A549 (cell line): ENCODE measurements at regions of chr12 and their contacts with region 1.

Region 1: GRCh38 chr12:98698603-98699463 is 53.7 kb downstream of the APAF1 start:
- DNase-seq: peak; percentile 66 to 84
- ATAC-seq: peak; percentile 99 to 100
- H3K4me3 ChIP-seq: no peak overlapping the region
- H3K27ac ChIP-seq: no peak overlapping the region
- H3K4me1 ChIP-seq: no peaks in the 10 kb centered on the region
- CTCF ChIP-seq: peak; percentile 80
- EP300 ChIP-seq: no peak
- POLR2A ChIP-seq: no peak
- RAD21 ChIP-seq: peak; percentile 85 to 92

Region 2: DNA sequence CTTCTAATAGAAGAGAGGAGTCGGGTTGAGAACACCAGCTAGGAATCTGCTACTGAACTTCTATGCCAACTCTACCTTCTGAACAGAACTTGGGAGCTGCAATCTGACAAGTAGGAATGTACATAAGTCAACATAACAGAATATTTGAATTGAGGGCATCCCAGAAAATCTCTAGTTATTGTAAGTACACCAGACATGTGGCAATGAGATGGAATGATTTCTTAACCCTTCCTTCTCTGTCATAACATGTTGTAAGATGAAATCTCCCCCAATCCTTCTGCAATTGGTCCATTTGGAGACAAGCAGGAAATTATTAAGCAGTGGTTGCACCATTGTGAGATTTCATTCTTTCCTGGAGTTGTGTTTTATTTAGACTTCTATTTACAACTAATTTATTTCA is 252.2 kb before region 1 on chr12:
- CTCF ChIA-PET with region 1: no interaction called
- POLR2A ChIA-PET with region 1: no interaction called
- DNase-seq: peak in 1 of 2 experiments; percentile 27
- ATAC-seq: peak in 1 of 2 experiments; percentile 47; a peak in 3 of 6 replicates
- H3K4me3 ChIP-seq: no peak overlapping the region
- H3K27ac ChIP-seq: no peak overlapping the region; a peak in 1 of 6 replicates
- H3K4me1 ChIP-seq: 0 out of 3 replicates have a peak, but pooled peaks cover 15% of the 10 kb centered on the region
- CTCF ChIP-seq: no peak
- EP300 ChIP-seq: no peak
- POLR2A ChIP-seq: no peak
- RAD21 ChIP-seq: no peak

Region 3: DNA sequence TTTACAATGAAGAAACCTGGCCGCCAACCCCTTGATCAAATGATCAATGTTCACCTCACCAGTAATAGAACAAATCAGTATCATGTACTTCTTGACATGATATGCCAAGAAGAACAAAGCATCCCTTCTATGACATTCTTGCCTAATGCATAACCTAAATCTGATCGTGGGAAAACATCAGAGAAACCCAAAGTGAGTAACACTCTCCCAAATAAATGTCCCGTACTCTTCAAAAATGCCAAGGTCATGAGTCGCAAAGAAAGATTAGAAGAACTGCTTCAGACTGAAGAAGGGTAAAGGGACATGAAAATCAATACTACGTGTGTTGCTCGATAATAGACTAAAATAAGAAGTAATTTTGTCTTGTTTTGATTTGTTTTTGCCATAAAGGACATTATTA is 116.7 kb before region 1 on chr12:
- CTCF ChIA-PET with region 1: no interaction called
- POLR2A ChIA-PET with region 1: no interaction called
- DNase-seq: no peak
- ATAC-seq: no peak
- H3K4me3 ChIP-seq: no peak overlapping the region
- H3K27ac ChIP-seq: no peak overlapping the region
- H3K4me1 ChIP-seq: peaks cover 8% of the 10 kb centered on the region; the same call in 2 of the 3 replicates
- CTCF ChIP-seq: no peak
- EP300 ChIP-seq: no peak
- POLR2A ChIP-seq: no peak
- RAD21 ChIP-seq: no peak

Region 4: DNA sequence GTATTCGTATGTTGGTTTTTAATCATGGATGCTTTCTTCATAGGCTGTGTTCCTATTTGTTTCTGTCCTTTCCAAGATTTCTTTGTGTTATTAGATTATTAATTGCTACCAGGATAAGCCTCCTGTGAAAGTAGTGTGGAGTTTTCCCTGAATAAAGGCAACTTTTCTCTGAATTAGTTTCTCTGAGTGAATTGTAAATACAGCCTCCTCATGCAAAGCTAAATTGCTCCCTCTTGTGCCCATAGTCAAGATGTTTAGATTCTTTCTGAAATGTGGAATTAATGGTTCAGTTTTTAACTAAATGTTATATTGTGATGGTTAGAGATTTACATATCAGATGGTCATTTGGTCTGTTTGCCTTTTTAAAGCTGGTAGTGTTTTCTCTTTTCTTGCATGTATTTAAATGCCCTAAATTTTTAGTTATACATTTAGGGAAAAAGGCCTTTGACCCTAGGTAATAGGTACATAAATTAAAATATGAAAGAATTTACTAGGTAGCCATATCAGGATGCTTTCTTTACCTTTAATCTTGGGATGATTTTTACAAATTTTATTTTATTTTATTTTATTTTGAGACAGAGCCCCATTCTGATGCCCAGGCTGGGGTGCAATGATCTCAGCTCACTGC is 44.9 kb before region 1 on chr12:
- CTCF ChIA-PET with region 1: no interaction called
- POLR2A ChIA-PET with region 1: no interaction called
- DNase-seq: peak; percentile 33 to 77
- ATAC-seq: peak; percentile 64 to 83; a peak in 3 of 6 replicates
- H3K4me3 ChIP-seq: no peak overlapping the region
- H3K27ac ChIP-seq: no peak overlapping the region
- H3K4me1 ChIP-seq: no peaks in the 10 kb centered on the region
- CTCF ChIP-seq: peak; percentile 88
- EP300 ChIP-seq: no peak
- POLR2A ChIP-seq: no peak
- RAD21 ChIP-seq: peak; percentile 91 to 94

Region 5: GRCh38 chr12:98686603-98687002 is 12.2 kb before region 1 on chr12:
- CTCF ChIA-PET with region 1: interaction called, 10 read pairs
- POLR2A ChIA-PET with region 1: no interaction called
- DNase-seq: no peak
- ATAC-seq: no peak
- H3K4me3 ChIP-seq: no peak overlapping the region
- H3K27ac ChIP-seq: no peak overlapping the region
- H3K4me1 ChIP-seq: no peaks in the 10 kb centered on the region
- CTCF ChIP-seq: no peak
- EP300 ChIP-seq: no peak
- POLR2A ChIP-seq: no peak
- RAD21 ChIP-seq: no peak

Region 6: DNA sequence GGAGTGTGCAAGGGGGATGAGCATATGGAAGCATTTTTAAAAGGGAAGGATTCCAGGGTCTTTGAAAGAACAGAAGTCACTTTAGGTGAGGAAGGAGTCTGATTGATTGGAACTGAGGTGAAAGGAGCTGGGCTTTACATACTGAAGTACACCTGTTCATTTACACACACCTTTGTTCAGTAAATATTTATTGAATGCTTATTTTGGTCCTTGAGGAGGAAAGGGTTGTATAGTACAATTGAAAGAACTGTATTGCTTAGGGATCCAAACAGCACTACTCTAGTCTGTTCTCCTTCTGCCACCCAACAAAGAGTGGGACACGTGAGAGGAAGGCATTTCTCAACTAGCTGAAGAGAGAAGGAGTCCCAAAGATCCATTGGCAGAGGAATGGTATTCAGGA is 10.2 kb after region 1 on chr12:
- CTCF ChIA-PET with region 1: interaction called, 20 read pairs
- POLR2A ChIA-PET with region 1: no interaction called
- DNase-seq: no peak
- ATAC-seq: no peak
- H3K4me3 ChIP-seq: no peak overlapping the region
- H3K27ac ChIP-seq: no peak overlapping the region
- H3K4me1 ChIP-seq: no peaks in the 10 kb centered on the region
- CTCF ChIP-seq: no peak
- EP300 ChIP-seq: no peak
- POLR2A ChIP-seq: no peak
- RAD21 ChIP-seq: no peak

Region 7: DNA sequence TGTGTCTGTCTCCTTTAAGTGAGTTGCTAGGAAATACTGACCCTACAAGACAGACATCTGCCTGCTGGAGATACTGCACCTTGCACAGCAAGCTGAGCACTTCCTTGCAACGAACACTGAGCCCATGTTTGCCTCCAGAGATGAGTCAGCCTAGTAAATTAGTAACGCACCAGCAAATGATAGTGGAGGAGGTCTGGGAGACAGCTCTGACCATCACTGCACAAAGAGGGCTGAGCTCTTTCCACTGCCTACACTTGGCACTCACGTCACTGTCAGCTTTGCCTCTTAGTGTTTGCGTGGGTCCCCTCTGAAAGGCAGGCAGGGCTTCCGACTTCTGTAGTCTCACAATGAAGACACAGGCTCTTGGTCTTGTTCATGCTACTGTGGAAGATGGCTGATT is 55.3 kb after region 1 on chr12:
- CTCF ChIA-PET with region 1: interaction called, 13 read pairs
- POLR2A ChIA-PET with region 1: no interaction called
- DNase-seq: peak; percentile 86 to 87
- ATAC-seq: peak; percentile 97 to 98
- H3K4me3 ChIP-seq: no peak overlapping the region
- H3K27ac ChIP-seq: peak overlapping the region; percentile 41 to 77
- H3K4me1 ChIP-seq: peaks cover 26% of the 10 kb centered on the region
- CTCF ChIP-seq: no peak
- EP300 ChIP-seq: no peak
- POLR2A ChIP-seq: no peak
- RAD21 ChIP-seq: no peak

Region 8: DNA sequence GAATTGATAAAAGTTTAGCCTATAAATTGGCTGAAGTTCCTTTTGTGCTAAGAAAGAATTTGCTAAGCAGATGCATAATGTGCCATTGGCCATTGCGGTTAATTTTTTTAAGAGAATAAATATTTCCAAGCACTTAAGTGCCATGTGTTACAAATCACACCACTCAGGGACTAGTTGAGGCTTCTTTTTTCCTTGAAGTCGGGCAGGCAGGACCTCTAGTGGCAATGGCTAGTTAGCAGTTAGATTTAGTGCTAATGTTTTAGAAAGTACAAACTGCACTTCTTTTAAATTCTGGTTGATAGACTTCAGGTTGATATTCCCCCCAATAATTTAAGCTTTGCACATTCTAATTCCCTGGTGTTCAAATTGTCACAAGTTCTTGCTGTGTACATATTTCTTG is 240.5 kb after region 1 on chr12:
- CTCF ChIA-PET with region 1: interaction called, 11 read pairs
- POLR2A ChIA-PET with region 1: no interaction called
- DNase-seq: peak in 1 of 2 experiments; percentile 48
- ATAC-seq: peak; percentile 76 to 83; a peak in 4 of 6 replicates
- H3K4me3 ChIP-seq: no peak overlapping the region
- H3K27ac ChIP-seq: no peak overlapping the region
- H3K4me1 ChIP-seq: no peaks in the 10 kb centered on the region
- CTCF ChIP-seq: peak; percentile 39; the same call in 2 of the 3 replicates
- EP300 ChIP-seq: no peak
- POLR2A ChIP-seq: no peak
- RAD21 ChIP-seq: peak; percentile 48 to 59; a peak in 4 of 5 replicates

Region 9: DNA sequence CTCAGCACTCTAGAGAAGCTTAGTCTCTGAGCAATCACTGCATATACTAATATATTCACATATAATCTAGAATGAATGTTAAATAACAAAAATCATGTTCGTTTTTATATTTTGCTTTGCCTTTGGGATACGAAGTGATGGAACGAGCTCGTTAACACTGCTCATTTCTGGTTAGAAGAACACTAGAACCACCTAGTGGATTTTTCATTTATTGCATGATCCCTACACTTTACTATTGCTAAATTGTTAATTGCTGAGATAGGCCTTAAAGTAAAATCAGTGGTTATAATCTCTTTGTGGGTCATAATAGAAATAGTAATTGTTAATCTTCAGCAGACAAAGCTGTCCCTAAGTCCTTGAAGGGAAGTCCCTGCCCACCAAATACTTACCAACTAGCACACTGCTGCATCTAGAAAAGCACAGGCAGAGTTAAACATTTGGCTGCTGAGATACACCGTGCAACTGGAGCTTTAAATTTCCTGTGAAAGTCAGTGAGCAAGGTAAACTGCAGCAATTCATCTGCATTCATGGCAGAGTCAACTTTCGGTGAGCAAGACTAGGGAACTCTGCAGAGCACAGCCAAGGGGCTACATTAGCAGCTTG is 300.0 kb after region 1 on chr12:
- CTCF ChIA-PET with region 1: interaction called, 42 read pairs
- POLR2A ChIA-PET with region 1: interaction called, 3 read pairs
- DNase-seq: peak; percentile 47 to 73
- ATAC-seq: peak; percentile 81 to 94
- H3K4me3 ChIP-seq: no peak overlapping the region
- H3K27ac ChIP-seq: no peak overlapping the region
- H3K4me1 ChIP-seq: no peaks in the 10 kb centered on the region
- CTCF ChIP-seq: peak; percentile 88
- EP300 ChIP-seq: no peak
- POLR2A ChIP-seq: no peak
- RAD21 ChIP-seq: peak; percentile 91